H1 (cell line): ENCODE measurements at regions of chr5 and their contacts with region 1.

Region 1: GRCh38 chr5:119411935-119412602 is 40.2 kb upstream of the HSD17B4 start:
- DNase-seq: peak in 1 of 2 experiments; percentile 65
- H3K4me3 ChIP-seq: peak overlapping the region; percentile 43 to 70 (median 56); a peak in 7 of 8 replicates
- H3K27ac ChIP-seq: no peak overlapping the region
- H3K4me1 ChIP-seq: no peaks in the 10 kb centered on the region
- H3K27me3 ChIP-seq: no peaks in the 10 kb centered on the region
- CTCF ChIP-seq: peak; percentile 36 to 88 (median 66); a peak in 3 of 4 replicates
- EP300 ChIP-seq: no peak
- POLR2A ChIP-seq: no peak; a peak in 1 of 3 replicates
- RAD21 ChIP-seq: peak; percentile 89 to 91

Region 2: DNA sequence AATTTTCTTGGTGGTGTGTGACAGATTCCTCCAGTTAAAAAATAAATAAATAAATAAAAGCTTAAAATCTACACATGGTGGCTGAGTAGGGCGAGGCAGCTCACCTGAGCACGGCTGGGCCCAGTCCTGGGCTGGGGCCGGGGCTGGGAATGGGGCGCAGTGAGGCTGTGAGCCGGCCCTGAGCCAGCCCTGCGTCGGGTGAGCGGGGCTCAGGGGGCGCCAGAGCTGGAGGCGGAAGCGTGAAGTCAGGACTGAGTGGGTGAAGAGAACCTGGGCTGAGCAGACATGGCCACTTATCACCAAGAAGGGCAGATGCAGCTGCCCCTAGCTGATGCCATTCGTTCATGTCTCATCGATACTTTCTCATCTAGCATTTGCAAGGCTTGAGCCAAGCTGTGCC is 400.9 kb before region 1 on chr5:
- CTCF ChIA-PET with region 1: interaction called, 11 read pairs
- POLR2A ChIA-PET with region 1: no interaction called
- DNase-seq: no peak
- H3K4me3 ChIP-seq: no peak overlapping the region
- H3K27ac ChIP-seq: no peak overlapping the region
- H3K4me1 ChIP-seq: no peaks in the 10 kb centered on the region
- H3K27me3 ChIP-seq: peaks cover 0 to 1% (median 0%) of the 10 kb centered on the region in 4 experiments; a peak in 1 of 7 replicates
- CTCF ChIP-seq: no peak
- EP300 ChIP-seq: no peak
- POLR2A ChIP-seq: no peak
- RAD21 ChIP-seq: no peak; a peak in 1 of 4 replicates

Region 3: DNA sequence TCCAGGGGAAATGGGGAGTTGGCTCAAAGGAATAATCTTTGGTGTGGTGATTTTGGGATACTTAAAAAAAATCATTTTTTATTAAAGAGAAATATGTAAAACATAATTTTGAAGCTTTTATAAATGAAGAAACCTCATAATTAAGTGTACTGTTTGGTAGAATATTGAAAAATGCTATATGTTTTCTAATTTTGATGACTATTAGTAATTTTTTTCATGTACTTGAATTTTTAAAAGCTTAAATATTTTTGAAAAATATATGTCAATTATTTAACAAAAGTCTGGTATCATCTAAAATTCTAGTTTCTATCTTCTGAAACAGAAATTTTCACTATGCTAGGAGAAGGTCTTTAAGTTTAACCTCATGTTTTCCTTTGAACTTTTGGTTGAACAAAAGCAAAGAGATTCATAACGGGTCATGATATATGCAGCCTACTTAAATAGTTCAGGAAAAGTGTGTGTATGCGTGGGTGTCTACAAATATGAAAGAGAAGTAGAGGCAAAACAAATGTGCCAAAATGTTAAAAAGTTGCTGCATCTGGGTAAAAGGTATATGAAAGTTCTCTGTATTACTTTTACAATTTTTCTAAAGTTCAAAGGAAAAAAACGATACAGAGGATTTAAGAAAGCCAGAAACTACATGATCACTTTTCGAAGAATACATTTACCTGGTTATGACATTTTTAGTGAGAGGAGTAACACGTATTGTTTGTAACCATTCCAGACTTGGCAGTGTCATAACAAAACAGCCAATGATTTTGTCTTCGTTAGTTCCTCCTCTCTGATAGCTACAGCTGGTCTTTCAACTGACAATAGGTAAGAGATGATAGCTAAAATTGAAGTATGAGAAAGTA is 173.6 kb before region 1 on chr5:
- CTCF ChIA-PET with region 1: interaction called, 17 read pairs
- POLR2A ChIA-PET with region 1: no interaction called
- DNase-seq: no peak
- H3K4me3 ChIP-seq: no peak overlapping the region
- H3K27ac ChIP-seq: no peak overlapping the region
- H3K4me1 ChIP-seq: no peaks in the 10 kb centered on the region
- H3K27me3 ChIP-seq: no peaks in the 10 kb centered on the region
- CTCF ChIP-seq: no peak
- EP300 ChIP-seq: no peak
- POLR2A ChIP-seq: no peak
- RAD21 ChIP-seq: no peak

Region 4: DNA sequence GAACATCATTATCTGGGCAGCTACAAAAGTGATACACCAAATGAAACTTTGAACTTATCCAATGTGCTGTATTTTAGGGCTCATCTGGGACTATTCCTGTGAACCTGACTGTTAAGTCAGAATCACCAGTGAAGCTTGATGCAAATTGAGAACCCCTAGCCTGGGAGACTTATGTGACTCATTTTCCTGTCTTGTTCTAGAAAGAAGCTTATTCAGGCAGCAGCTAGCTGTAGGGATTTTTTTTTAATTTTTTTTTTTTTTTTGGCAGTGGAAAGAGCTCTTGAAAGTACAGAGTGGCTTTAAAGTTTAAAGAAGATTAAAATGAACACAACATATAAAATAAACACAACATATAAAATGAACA is 137.3 kb before region 1 on chr5:
- CTCF ChIA-PET with region 1: interaction called, 15 read pairs
- POLR2A ChIA-PET with region 1: no interaction called
- DNase-seq: no peak
- H3K4me3 ChIP-seq: no peak overlapping the region
- H3K27ac ChIP-seq: no peak overlapping the region
- H3K4me1 ChIP-seq: peaks cover 0 to 2% (median under 1%) of the 10 kb centered on the region in 4 experiments; a peak in 2 of 7 replicates
- H3K27me3 ChIP-seq: no peaks in the 10 kb centered on the region
- CTCF ChIP-seq: no peak
- EP300 ChIP-seq: no peak
- POLR2A ChIP-seq: no peak
- RAD21 ChIP-seq: no peak

Region 5: DNA sequence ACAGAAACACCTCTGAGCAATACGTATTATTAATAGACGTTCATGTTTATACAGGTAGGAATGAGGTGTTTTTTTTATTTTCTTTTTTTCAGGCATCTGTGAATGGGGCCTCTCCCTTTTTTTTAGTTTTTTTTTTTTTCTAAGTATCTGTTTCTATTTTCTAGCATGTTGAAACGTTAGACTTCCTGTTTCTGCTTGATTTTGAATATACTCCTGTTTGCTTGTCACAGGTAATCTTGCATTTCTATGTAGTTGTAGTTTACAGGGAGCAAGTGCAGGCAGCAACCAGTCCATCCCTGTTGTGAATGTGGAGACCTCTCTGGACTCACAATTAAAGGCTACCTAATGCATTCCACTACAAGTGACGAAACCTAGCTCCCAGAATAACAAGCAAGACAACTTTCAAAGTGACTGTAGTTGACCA is 79.1 kb before region 1 on chr5:
- CTCF ChIA-PET with region 1: interaction called, 12 read pairs
- POLR2A ChIA-PET with region 1: no interaction called
- DNase-seq: no peak
- H3K4me3 ChIP-seq: no peak overlapping the region
- H3K27ac ChIP-seq: no peak overlapping the region
- H3K4me1 ChIP-seq: peaks cover 0 to 10% (median 5%) of the 10 kb centered on the region in 4 experiments
- H3K27me3 ChIP-seq: no peaks in the 10 kb centered on the region
- CTCF ChIP-seq: no peak
- EP300 ChIP-seq: no peak
- POLR2A ChIP-seq: no peak
- RAD21 ChIP-seq: no peak

Region 6: DNA sequence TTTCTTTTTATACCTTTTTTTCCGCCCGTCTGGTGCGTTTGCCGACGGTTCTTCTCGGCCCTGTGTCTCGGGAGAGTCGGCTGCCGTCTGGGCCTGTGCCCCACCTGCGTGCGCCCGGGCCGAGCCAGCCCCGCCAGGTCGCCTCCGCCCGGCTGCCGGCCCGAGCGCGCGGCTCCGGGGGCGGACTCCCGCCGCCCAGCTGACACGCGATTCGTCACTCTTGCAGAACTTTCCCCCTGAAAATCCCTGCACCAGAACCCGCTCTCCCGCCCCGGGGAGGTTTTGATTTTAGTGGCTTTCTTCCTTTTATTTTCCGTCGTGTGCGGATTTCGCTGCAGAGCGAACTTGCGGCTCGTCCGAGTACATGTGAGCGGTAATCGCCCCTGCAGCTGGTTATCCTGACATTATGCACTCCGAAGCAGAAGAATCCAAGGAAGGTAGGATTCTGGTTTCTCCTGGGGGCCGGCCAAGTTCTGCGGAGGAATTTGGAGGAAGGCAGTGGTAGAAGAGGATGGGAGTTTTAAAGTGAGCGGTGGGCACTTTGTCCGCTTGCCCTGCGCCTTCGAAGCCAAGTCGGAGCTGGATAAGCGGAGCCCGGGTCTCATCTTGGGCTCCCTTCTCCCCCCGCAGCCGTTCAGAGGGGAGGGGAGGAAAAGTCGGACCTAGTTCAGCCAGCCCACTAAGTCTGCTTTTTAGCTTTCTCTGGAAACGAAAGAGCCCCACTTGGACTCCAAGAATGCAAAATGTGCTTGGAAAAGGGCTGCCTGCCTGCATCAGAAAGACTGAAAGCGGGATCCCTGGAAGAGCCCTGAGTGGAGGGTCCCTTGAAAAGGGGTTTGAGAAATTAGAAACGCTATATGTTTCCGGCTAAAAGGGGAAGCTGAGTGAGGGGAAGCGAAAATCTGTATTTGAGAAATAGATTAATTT is 56.1 kb before region 1 on chr5 and contains the start of gene TNFAIP8:
- CTCF ChIA-PET with region 1: interaction called, 16 read pairs
- POLR2A ChIA-PET with region 1: interaction called, 3 read pairs
- DNase-seq: peak; percentile 17 to 74
- H3K4me3 ChIP-seq: peak within 1 kb of the TSS; percentile 27 to 72 (median 56)
- H3K27ac ChIP-seq: no peak within 1 kb of the TSS
- H3K4me1 ChIP-seq: peaks cover 2 to 18% (median 14%) of the 10 kb centered on the region in 4 experiments; a peak in 5 of 7 replicates
- H3K27me3 ChIP-seq: 0 out of 7 replicates have a peak, but pooled peaks cover 0 to 3% (median 1%) of the 10 kb centered on the region in 4 experiments
- CTCF ChIP-seq: no peak
- EP300 ChIP-seq: no peak
- POLR2A ChIP-seq: 0 out of 3 replicates have a peak, but pooled peaks of 1 of the 2 experiments have one; percentile 21
- RAD21 ChIP-seq: no peak
- total RNA-seq, gene TNFAIP8: 17.8 and 19.3 TPM in 2 replicates

Region 7: DNA sequence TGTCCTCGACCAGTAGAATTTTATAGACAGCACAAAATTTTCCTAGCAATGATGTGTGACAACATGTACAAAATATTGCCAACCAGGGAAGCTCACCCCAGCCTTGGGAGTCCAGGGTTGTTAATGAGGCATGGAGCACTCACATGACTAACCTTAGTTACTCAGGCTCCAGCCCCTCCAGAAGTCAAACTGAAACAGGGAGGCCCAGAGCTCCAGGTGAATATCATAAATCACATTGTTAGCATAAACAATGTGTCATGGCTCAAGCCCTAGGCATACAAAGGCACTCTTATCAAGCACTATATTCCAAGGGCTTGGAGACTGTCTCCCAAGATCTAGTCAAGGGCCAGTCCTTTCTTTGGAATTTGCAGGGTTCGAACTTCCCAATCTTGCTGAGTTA is 11.8 kb before region 1 on chr5:
- CTCF ChIA-PET with region 1: interaction called, 32 read pairs
- POLR2A ChIA-PET with region 1: interaction called, 3 read pairs
- DNase-seq: peak in 1 of 2 experiments; percentile 29
- H3K4me3 ChIP-seq: no peak overlapping the region
- H3K27ac ChIP-seq: no peak overlapping the region
- H3K4me1 ChIP-seq: peaks cover 0 to 11% (median 2%) of the 10 kb centered on the region in 4 experiments; a peak in 3 of 7 replicates
- H3K27me3 ChIP-seq: no peaks in the 10 kb centered on the region
- CTCF ChIP-seq: no peak
- EP300 ChIP-seq: no peak
- POLR2A ChIP-seq: no peak
- RAD21 ChIP-seq: no peak